ENCODE measurements at regions of chr2 and their contacts with region 1.

Region 1: GRCh38 chr2:100935372-100935752 is 66.7 kb upstream of the RPL31 start:
- DNase-seq: no peak
- ATAC-seq: peak; percentile 87 to 95 (median 93)
- H3K4me3 ChIP-seq: no peak overlapping the region
- H3K27ac ChIP-seq: peak overlapping the region; percentile 30
- H3K4me1 ChIP-seq: peaks cover 22% of the 10 kb centered on the region
- H3K27me3 ChIP-seq: no peaks in the 10 kb centered on the region
- CTCF ChIP-seq: no peak

Region 2: DNA sequence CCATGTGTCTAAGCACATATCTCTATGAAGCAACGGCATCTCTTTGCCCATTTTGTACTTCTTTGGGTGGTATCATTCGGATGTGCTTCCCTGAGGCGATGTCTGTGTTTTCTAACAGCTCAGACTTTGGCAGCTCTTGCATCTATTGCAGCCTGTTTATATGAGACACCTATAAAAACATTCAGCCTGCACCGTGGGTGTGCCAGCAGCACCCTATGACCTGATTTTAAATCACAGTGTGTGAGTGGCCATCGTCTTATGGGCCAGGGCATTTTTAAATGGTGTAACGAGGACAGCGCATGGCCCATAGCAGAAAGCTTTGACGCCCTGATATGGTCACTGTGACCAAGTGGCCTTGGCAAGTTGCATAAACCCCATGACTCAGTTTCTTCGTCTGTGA is 102.5 kb before region 1 on chr2:
- intact Hi-C with region 1: loop called in 1 of 2 experiments (anchors 5 kb)
- DNase-seq: peak in 1 of 2 donors; percentile 69
- ATAC-seq: peak; percentile 79 to 97 (median 88)
- H3K4me3 ChIP-seq: no peak overlapping the region
- H3K27ac ChIP-seq: peak overlapping the region; percentile 52
- H3K4me1 ChIP-seq: peaks cover 19% of the 10 kb centered on the region
- H3K27me3 ChIP-seq: no peaks in the 10 kb centered on the region
- CTCF ChIP-seq: no peak

Region 3: DNA sequence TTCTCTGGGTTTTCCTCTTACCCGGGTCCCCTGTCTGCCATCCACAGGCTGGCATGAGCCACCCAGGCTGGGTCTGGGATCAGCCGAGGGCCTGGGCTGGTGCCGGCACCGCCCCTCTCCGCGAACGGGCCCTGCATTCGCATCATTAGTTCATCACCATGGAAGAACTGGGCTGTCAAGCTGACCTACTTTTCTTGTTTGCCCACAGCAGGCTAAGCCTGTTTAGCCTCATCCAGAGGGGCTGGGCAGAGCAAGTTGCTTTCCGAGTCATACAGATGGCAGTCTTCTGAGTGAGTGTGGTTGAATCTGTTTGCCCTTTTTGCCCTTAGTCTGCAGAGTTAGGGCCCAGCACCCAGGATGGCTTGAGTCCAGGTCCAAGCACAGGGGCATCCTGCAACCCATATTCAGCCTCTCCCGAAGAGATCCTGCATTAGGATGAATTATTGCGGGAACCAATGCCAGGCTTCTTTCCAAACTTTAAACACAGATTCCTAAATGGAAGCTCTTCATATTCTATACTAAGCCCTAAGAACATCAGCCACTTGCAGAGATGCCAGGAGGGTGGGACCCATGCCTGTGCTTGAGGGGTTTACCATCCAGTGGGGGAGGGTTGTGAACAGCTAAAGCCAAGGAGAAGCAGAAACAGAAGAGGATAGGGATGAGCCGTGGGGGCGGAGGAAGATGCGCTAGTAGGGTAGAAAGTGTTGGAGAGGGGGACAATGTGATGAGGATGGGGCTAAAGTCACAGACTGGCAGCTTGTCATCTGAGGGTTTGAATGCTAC is 47.5 kb before region 1 on chr2:
- intact Hi-C with region 1: loop called in 1 of 2 experiments (anchors 5 kb)
- DNase-seq: no peak
- ATAC-seq: peak in 1 of 4 donors; percentile 17
- H3K4me3 ChIP-seq: no peak overlapping the region
- H3K27ac ChIP-seq: no peak overlapping the region
- H3K4me1 ChIP-seq: peaks cover 14% of the 10 kb centered on the region
- H3K27me3 ChIP-seq: no peaks in the 10 kb centered on the region
- CTCF ChIP-seq: no peak

Region 4: DNA sequence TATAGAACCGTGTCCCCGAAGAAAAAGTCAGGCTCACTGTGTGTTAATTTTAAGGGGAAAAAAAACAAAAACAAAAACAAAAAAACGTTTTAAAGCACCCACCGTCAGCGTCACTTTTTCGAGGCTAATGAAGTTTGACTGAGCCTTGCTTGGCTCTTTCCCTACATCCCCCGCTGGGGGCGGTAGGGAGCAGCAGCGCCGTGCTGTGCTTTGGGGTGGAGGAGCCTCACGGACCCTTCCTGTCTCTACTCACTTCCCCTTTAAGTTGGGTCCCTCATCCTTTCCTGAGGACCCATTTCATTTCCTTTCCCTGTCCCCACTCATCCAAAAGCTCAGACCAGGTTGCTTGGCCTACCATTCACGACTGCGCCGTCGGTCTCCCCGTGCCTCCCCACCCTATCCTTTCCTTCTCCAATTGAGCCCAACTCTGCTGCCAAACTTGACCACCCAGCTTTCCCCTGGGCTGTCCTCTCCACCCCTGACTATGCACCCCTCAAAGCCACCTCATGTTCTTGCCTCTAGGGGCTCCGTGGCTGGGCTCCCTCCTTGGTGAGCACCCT is 16.0 kb before region 1 on chr2:
- intact Hi-C with region 1: loop called in 1 of 2 experiments (anchors 2 kb)
- DNase-seq: no peak
- ATAC-seq: no peak
- H3K4me3 ChIP-seq: no peak overlapping the region
- H3K27ac ChIP-seq: no peak overlapping the region
- H3K4me1 ChIP-seq: no peaks in the 10 kb centered on the region
- H3K27me3 ChIP-seq: no peaks in the 10 kb centered on the region
- CTCF ChIP-seq: no peak